ENCODE measurements at regions of chr1 and their contacts with region 1.

Region 1: DNA sequence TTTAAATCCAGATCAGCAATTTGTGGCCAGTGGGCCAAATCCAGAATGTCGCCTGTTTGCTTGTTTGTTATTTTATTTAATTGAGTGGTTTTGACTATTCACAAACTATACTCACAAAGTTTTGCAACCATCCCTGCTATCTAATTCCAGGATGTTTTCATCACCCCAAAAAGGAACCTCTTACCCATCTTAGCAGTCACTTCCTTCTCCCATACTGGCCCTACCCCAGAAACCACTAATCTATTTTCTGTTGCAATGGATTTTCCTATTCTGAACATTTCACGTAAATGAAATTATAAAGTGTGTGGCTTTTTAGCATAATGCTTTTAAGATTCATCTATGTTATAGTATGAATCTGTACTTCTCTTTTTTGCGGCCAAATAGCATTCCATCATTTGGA is 41.3 kb downstream of the WDTC1 start:
- DNase-seq: no peak
- ATAC-seq: no peak
- H3K4me3 ChIP-seq: no peak overlapping the region
- H3K27ac ChIP-seq: no peak overlapping the region
- H3K4me1 ChIP-seq: no peaks in the 10 kb centered on the region
- H3K27me3 ChIP-seq: no peaks in the 10 kb centered on the region
- CTCF ChIP-seq: no peak
- POLR2A ChIP-seq: no peak
- RAD21 ChIP-seq: no peak

Region 2: GRCh38 chr1:27161594-27161993 is 114.1 kb before region 1 on chr1:
- CTCF ChIA-PET with region 1: no interaction called
- POLR2A ChIA-PET with region 1: no interaction called
- dilution Hi-C with region 1: no loop called
- in situ Hi-C with region 1: no loop called
- intact Hi-C with region 1: no loop called
- DNase-seq: no peak
- ATAC-seq: no peak
- H3K4me3 ChIP-seq: no peak overlapping the region
- H3K27ac ChIP-seq: no peak overlapping the region
- H3K4me1 ChIP-seq: 0 out of 2 replicates have a peak, but pooled peaks cover 2% of the 10 kb centered on the region
- H3K27me3 ChIP-seq: no peaks in the 10 kb centered on the region
- CTCF ChIP-seq: no peak
- POLR2A ChIP-seq: no peak
- RAD21 ChIP-seq: no peak

Region 3: DNA sequence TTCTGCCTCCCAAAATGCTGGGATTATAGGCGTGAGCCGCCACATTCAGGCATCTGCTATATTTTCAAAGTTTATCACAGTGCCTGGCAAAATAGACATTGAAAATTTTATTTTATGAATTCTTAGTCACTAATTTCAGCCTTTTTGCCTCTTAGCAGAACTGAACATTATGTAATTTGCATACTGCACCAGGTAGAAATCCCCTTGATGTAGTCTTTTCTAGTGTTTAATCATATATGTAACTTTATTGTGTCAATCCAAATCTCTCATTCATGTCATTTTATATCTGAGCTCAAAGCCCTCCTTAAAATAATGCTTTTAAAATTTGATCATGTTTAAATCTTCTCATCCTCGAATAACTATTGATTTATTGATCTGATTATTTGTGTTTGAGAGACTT is 22.1 kb before region 1 on chr1:
- CTCF ChIA-PET with region 1: no interaction called
- POLR2A ChIA-PET with region 1: no interaction called
- dilution Hi-C with region 1: no loop called
- in situ Hi-C with region 1: no loop called
- intact Hi-C with region 1: loop called (anchors 1 kb)
- DNase-seq: no peak
- ATAC-seq: no peak
- H3K4me3 ChIP-seq: no peak overlapping the region
- H3K27ac ChIP-seq: no peak overlapping the region
- H3K4me1 ChIP-seq: no peaks in the 10 kb centered on the region
- H3K27me3 ChIP-seq: no peaks in the 10 kb centered on the region
- CTCF ChIP-seq: no peak
- POLR2A ChIP-seq: no peak
- RAD21 ChIP-seq: no peak